ENCODE measurements at regions of chr21 and their contacts with region 1.

Region 1: GRCh38 chr21:31866077-31866511 is 6.7 kb upstream of the HUNK start:
- DNase-seq: peak; percentile 62
- H3K4me3 Mint-ChIP-seq: no peak overlapping the region
- H3K27ac Mint-ChIP-seq: no peak overlapping the region
- H3K4me1 Mint-ChIP-seq: no peaks in the 10 kb centered on the region
- H3K27me3 Mint-ChIP-seq: peaks cover 18% of the 10 kb centered on the region

Region 2: DNA sequence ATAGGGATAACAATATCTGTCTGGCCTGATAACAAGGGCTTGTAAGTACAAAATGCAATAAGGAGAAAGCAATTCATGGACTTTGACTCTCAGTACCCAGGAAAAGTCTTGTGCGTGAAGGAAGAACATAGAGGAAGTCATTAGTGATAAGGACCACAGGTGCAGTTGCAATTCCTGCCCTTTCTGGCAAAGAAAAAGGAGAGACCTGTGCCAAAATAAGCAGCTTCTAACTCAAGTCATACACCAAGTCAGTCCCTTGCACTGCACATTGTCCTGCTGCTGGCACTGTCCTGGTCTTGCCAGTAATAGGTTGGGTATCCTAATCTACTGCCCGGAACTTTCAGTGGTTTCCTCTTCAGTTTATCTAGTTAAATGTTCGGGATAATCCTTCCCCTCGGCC is 221.5 kb before region 1 on chr21:
- CTCF ChIA-PET with region 1: no interaction called
- POLR2A ChIA-PET with region 1: no interaction called
- DNase-seq: no peak
- H3K4me3 Mint-ChIP-seq: no peak overlapping the region
- H3K27ac Mint-ChIP-seq: no peak overlapping the region
- H3K4me1 Mint-ChIP-seq: no peaks in the 10 kb centered on the region
- H3K27me3 Mint-ChIP-seq: no peaks in the 10 kb centered on the region

Region 3: DNA sequence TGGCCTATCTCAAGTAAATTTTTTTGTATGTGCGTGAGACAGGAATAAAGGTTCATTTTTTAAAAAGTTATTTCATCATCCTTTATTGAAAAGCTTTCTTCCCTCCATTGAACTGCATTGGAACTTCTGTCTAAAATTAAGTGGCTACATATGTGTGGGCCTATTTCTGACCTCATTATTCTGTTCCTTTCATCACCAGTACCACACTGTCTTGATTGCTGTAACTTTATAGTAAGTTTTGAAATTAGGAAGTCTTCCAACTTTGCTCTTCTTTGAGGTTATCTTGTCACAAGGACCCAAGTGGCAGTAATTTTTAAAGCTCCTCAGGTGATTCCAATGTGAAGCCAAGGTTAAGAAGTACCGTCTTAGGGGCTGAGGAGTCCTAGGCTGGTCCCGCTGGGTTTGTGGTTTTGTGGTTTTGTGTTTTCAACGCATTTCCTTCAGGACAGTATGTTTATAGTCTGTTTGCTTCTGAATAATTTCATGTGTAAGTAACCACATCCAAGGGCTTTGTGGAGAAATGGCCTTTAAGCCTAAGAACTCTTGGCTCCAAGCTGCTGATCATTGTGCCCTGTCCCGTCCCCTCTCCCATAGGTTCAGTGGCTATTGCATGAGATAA is 121.8 kb before region 1 on chr21:
- CTCF ChIA-PET with region 1: no interaction called
- POLR2A ChIA-PET with region 1: no interaction called
- DNase-seq: no peak
- H3K4me3 Mint-ChIP-seq: no peak overlapping the region
- H3K27ac Mint-ChIP-seq: no peak overlapping the region
- H3K4me1 Mint-ChIP-seq: peaks cover 5% of the 10 kb centered on the region
- H3K27me3 Mint-ChIP-seq: peaks cover 6% of the 10 kb centered on the region

Region 4: DNA sequence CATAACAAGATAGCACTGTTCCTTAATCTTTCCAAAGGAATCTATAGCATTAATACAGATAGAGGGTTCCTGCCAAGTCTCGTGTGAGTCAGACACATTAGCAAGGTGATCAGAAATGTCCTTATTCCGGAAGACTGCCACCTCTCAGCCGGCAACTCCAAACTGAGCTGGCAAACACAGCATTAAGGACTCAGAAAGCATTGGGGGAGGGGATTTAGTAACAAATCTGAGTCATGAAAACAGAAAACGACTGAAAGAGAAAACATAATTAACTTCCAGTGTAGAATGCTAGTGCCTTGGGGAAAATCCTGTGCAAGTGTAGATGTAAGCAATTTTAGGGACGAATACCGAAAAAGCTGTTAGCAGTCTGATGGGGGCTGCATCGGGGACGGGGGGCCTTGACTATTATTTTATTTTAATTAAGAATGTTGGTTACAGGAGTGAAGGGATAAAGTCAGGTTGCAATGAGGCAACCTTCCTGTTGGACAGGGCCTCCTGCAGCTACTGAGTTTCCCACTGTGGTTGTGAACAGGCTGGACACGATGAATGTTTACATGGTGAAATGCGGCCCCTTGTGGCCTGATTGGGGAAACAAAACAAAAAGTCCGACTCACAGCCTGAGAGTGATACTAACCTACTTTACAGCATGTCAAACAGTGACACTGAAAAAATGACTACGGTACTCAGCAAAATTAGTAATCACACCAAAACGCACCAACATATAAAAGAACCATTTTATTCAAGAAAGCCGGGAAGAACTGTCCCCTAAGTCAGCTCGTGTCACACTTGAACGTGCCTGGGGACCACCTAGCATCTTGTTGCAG is 392.1 kb after region 1 on chr21:
- CTCF ChIA-PET with region 1: interaction called, 19 read pairs
- POLR2A ChIA-PET with region 1: no interaction called
- DNase-seq: peak; percentile 50
- H3K4me3 Mint-ChIP-seq: no peak overlapping the region
- H3K27ac Mint-ChIP-seq: no peak overlapping the region
- H3K4me1 Mint-ChIP-seq: peaks cover 1% of the 10 kb centered on the region
- H3K27me3 Mint-ChIP-seq: no peaks in the 10 kb centered on the region

Measured in activated CD4-positive, alpha-beta memory T cell treated with anti-CD3 and anti-CD28 coated beads, Interleukin-2, amount 10 ng/mL, durations not matched to agents 7 days and 5 days (primary cell).